CD8-positive, alpha-beta T cell (primary cell): ENCODE measurements at regions of chr6 and their contacts with region 1.

Region 1: GRCh38 chr6:134630508-134631121 is 312.7 kb upstream of the SGK1 start:
- DNase-seq: peak in 1 of 9 experiments; percentile 14
- ATAC-seq: no peak
- H3K4me3 ChIP-seq: no peak overlapping the region
- H3K4me3 Mint-ChIP-seq: no peak overlapping the region
- H3K27ac ChIP-seq: no peak overlapping the region
- H3K27ac Mint-ChIP-seq: no peak overlapping the region
- H3K4me1 ChIP-seq: peaks cover 12% of the 10 kb centered on the region
- H3K4me1 Mint-ChIP-seq: peaks cover 17% of the 10 kb centered on the region
- H3K27me3 ChIP-seq: no peaks in the 10 kb centered on the region
- H3K27me3 Mint-ChIP-seq: no peaks in the 10 kb centered on the region
- CTCF ChIP-seq: no peak

Region 2: GRCh38 chr6:133170600-133170999 is 1460.0 kb before region 1 on chr6:
- CTCF ChIA-PET with region 1: no interaction called
- POLR2A ChIA-PET with region 1: no interaction called
- intact Hi-C with region 1: no loop called
- DNase-seq: no peak
- ATAC-seq: no peak
- H3K4me3 ChIP-seq: no peak overlapping the region
- H3K4me3 Mint-ChIP-seq: no peak overlapping the region
- H3K27ac ChIP-seq: no peak overlapping the region
- H3K27ac Mint-ChIP-seq: no peak overlapping the region
- H3K4me1 ChIP-seq: no peaks in the 10 kb centered on the region
- H3K4me1 Mint-ChIP-seq: no peaks in the 10 kb centered on the region
- H3K27me3 ChIP-seq: no peaks in the 10 kb centered on the region
- H3K27me3 Mint-ChIP-seq: no peaks in the 10 kb centered on the region
- CTCF ChIP-seq: no peak

Region 3: DNA sequence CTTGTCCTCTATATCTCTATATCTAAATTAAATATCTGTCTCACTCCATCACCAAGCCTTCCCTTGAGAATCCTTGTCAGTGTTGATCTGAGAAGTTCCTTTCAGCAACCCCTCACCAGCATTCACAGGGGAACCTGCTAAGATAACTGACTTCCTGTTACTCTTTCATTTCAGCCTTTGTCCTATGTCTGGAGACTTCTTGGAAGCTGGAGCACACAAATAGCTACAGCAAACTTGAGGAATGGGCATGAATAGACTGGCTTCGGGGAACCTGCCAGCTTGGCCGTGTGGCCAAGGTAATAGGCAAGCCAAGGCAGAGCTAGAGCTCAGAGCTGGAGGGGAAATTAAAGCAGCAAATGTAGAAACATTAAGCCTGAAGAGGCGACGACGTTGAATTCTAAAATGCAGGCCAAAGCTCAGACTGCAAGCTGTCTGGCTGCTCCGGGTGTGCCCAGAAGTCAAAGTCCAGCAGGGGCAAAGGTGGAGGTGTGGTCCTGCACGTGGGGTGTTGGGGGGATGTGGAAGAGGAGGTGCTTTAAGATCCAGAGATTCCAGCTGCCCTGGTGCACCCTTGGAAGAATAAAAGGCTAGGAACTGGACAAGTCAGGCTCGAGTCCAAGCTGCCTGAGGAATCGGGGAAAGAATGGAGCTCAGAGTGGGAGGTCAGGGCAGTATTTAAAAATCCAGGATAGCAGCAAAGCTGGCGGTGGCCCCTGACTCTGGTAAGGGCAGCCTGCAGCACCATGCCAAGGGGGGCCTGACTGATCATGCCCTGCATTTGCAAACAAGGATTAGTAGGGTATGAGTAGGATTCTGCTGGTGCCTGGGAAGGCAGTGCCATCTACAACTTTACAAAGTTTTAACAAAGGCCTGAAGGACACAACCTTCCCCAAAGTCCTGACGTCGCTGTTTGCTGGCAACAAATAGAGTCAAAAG is 127.7 kb before region 1 on chr6:
- CTCF ChIA-PET with region 1: no interaction called
- POLR2A ChIA-PET with region 1: no interaction called
- intact Hi-C with region 1: loop called in 1 of 2 experiments (anchors 5 kb)
- DNase-seq: no peak
- ATAC-seq: no peak
- H3K4me3 ChIP-seq: no peak overlapping the region
- H3K4me3 Mint-ChIP-seq: no peak overlapping the region
- H3K27ac ChIP-seq: no peak overlapping the region
- H3K27ac Mint-ChIP-seq: no peak overlapping the region
- H3K4me1 ChIP-seq: no peaks in the 10 kb centered on the region
- H3K4me1 Mint-ChIP-seq: no peaks in the 10 kb centered on the region
- H3K27me3 ChIP-seq: no peaks in the 10 kb centered on the region
- H3K27me3 Mint-ChIP-seq: no peaks in the 10 kb centered on the region
- CTCF ChIP-seq: no peak